ENCODE measurements at regions of chr3 and their contacts with region 1.

Region 1: GRCh38 chr3:17412950-17413530 is 329.4 kb downstream of the TBC1D5 start:
- DNase-seq: peak; percentile 7
- ATAC-seq: peak; percentile 61
- H3K4me3 Mint-ChIP-seq: no peak overlapping the region
- H3K27ac Mint-ChIP-seq: no peak overlapping the region
- H3K4me1 Mint-ChIP-seq: no peaks in the 10 kb centered on the region
- H3K27me3 Mint-ChIP-seq: no peaks in the 10 kb centered on the region

Region 2: DNA sequence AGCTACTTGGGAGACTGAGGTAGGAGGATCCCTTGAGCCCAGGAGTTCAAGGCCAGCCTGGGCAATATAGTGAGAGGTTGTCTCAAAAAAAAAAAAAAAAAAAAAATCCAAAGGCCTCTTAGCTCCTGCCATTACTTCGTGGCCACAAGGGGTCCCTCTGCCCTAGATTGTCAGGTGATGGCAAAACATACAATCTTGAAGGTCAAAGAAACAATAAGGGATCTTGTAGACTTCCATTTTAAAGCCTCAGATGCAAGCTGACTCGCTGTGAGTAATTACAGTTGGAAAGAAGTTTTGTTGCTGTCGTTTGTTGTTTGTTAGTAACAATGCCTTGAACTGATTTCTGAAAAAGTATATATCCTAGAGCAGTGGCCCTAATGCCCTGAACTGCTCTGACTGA is 584.2 kb before region 1 on chr3:
- CTCF ChIA-PET with region 1: no interaction called
- POLR2A ChIA-PET with region 1: no interaction called
- intact Hi-C with region 1: loop called in 1 of 2 experiments (anchors 1 kb)
- DNase-seq: peak; percentile 73
- ATAC-seq: peak; percentile 51
- H3K4me3 Mint-ChIP-seq: no peak overlapping the region
- H3K27ac Mint-ChIP-seq: no peak overlapping the region
- H3K4me1 Mint-ChIP-seq: peaks cover 16% of the 10 kb centered on the region
- H3K27me3 Mint-ChIP-seq: no peaks in the 10 kb centered on the region

Region 3: GRCh38 chr3:17233398-17233800 is 179.6 kb before region 1 on chr3:
- CTCF ChIA-PET with region 1: no interaction called
- POLR2A ChIA-PET with region 1: no interaction called
- intact Hi-C with region 1: loop called in 1 of 2 experiments (anchors 1 kb)
- DNase-seq: peak; percentile 47
- ATAC-seq: peak; percentile 91
- H3K4me3 Mint-ChIP-seq: no peak overlapping the region
- H3K27ac Mint-ChIP-seq: no peak overlapping the region
- H3K4me1 Mint-ChIP-seq: peaks cover 24% of the 10 kb centered on the region
- H3K27me3 Mint-ChIP-seq: no peaks in the 10 kb centered on the region

Region 4: DNA sequence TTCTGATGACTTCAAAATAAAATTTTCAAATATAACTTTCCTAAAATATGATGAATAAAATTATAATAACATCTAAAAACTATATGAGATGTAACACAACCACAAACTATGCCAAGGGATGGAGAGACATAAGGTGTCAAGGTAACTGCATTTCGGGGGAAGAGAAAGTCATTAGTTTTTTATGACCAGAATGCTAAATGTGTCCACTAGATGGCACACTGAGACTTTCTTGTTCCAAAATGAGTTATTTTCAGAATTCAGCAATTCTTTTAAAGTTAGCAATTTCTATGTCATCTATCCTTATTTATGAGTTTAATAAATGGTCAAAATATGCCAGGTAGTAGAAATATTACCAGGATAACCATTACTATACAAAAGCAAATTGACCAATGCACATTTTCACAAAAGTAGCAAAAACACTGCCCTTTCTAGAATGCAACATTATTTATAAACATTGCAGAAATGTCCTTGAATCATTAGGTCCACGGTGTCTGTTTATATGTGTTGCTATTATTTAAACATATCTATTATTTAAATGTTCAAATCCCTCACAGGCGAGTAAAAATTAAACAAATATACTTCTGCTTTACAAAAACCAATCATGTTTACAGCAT is 154.1 kb before region 1 on chr3:
- CTCF ChIA-PET with region 1: interaction called, 7 read pairs
- POLR2A ChIA-PET with region 1: no interaction called
- intact Hi-C with region 1: loop called (anchors 1 kb)
- DNase-seq: peak; percentile 8
- ATAC-seq: no peak
- H3K4me3 Mint-ChIP-seq: no peak overlapping the region
- H3K27ac Mint-ChIP-seq: no peak overlapping the region
- H3K4me1 Mint-ChIP-seq: no peaks in the 10 kb centered on the region
- H3K27me3 Mint-ChIP-seq: no peaks in the 10 kb centered on the region

Region 5: DNA sequence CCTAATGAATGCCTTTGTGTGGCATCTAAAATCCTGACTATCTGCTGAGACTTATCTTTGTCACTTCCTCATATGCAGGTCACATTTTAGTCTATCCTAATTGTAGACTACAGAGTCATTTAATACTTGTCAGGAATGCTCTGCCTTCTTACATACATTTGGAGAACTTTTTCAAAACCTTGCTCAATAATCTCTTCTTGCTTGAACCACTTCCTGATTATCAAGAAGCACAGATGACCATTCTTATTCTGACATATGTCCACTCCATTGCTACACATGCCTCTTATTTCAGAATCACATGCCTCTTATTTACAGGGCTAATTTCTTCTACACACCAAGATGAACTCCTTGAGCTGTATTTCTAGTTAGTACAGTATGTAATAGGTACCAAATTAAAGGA is 70.9 kb before region 1 on chr3:
- CTCF ChIA-PET with region 1: no interaction called
- POLR2A ChIA-PET with region 1: no interaction called
- intact Hi-C with region 1: no loop called
- DNase-seq: no peak
- ATAC-seq: no peak
- H3K4me3 Mint-ChIP-seq: no peak overlapping the region
- H3K27ac Mint-ChIP-seq: no peak overlapping the region
- H3K4me1 Mint-ChIP-seq: no peaks in the 10 kb centered on the region
- H3K27me3 Mint-ChIP-seq: no peaks in the 10 kb centered on the region

Region 6: DNA sequence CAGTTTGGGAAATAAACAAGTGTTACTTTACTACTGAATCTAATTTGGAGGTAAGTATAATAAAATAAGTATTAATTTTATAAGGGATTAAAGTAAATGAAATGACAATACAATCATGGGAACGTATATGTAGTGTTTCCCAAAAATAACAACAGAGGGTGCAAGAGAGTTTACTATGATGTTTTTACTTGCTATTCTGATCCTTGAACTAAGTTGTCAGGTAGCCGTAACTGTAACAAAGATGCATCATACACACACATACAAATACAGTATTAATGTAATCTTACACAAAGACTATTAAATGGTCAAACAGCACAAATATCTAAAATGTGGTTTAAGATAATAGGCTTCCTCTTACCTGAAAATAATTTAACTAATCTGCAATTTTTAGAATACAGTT is 18.0 kb after region 1 on chr3:
- CTCF ChIA-PET with region 1: interaction called, 10 read pairs
- POLR2A ChIA-PET with region 1: no interaction called
- intact Hi-C with region 1: no loop called
- DNase-seq: no peak
- ATAC-seq: peak; percentile 42
- H3K4me3 Mint-ChIP-seq: no peak overlapping the region
- H3K27ac Mint-ChIP-seq: no peak overlapping the region
- H3K4me1 Mint-ChIP-seq: no peaks in the 10 kb centered on the region
- H3K27me3 Mint-ChIP-seq: no peaks in the 10 kb centered on the region

Region 7: DNA sequence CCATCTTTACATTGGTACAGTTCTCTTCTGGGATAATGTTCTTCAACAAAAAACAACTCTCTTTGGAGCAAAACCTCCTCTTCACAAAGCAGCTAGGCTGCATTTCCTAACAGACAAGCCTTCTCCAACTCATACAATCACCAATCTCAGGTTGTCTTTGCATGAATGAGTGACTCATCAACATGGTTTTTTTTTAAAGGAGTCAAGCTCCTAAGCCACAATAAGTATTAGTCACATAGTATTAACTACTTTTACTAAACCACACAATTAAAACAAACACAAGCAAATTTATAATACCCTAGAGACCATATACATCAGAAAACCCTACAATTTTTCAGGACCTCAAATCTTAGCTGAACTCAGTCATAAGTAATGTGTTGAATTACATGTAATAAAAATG is 192.0 kb after region 1 on chr3:
- CTCF ChIA-PET with region 1: no interaction called
- POLR2A ChIA-PET with region 1: no interaction called
- intact Hi-C with region 1: no loop called
- DNase-seq: no peak
- ATAC-seq: peak; percentile 78
- H3K4me3 Mint-ChIP-seq: no peak overlapping the region
- H3K27ac Mint-ChIP-seq: no peak overlapping the region
- H3K4me1 Mint-ChIP-seq: peaks cover 6% of the 10 kb centered on the region
- H3K27me3 Mint-ChIP-seq: no peaks in the 10 kb centered on the region

Region 8: GRCh38 chr3:17717411-17717810 is 304.4 kb after region 1 on chr3:
- CTCF ChIA-PET with region 1: no interaction called
- POLR2A ChIA-PET with region 1: no interaction called
- intact Hi-C with region 1: no loop called
- DNase-seq: no peak
- ATAC-seq: no peak
- H3K4me3 Mint-ChIP-seq: no peak overlapping the region
- H3K27ac Mint-ChIP-seq: no peak overlapping the region
- H3K4me1 Mint-ChIP-seq: no peaks in the 10 kb centered on the region
- H3K27me3 Mint-ChIP-seq: no peaks in the 10 kb centered on the region

Region 9: GRCh38 chr3:17749281-17749680 is 336.2 kb after region 1 on chr3:
- CTCF ChIA-PET with region 1: no interaction called
- POLR2A ChIA-PET with region 1: no interaction called
- intact Hi-C with region 1: no loop called
- DNase-seq: peak; percentile 44
- ATAC-seq: peak; percentile 74
- H3K4me3 Mint-ChIP-seq: peak overlapping the region; percentile 24
- H3K27ac Mint-ChIP-seq: peak overlapping the region; percentile 14
- H3K4me1 Mint-ChIP-seq: peaks cover 21% of the 10 kb centered on the region
- H3K27me3 Mint-ChIP-seq: no peaks in the 10 kb centered on the region

Region 10: DNA sequence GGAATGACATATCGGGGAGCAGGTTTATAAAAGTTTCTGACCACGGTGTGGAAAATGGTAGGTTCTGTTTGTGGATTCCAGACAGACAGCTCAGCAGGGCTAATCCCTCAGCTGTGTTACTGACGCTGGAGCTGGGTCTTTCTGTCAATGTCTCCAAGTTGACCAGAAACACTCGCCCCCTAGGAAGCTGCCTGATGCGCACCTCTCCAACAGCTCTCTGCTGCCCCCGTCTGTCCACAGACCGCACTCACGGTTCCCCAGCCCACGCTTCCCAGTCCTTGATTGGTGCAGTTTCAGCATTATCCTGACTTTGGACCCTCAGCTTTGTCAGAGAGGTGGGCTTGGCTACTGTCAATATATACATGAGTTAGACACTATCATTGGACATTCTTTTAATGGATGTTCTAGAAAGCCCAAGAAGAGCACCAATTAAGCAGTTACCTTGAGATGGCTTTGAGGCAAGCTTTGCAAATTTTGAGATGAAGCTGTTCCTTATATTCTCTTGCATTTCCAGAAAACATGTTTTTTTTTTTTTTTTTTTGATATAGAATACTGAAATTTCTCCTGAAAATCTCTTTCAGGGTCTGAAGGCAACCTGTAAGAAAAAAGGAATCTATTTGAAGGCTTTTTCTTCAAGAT is 428.3 kb after region 1 on chr3:
- CTCF ChIA-PET with region 1: interaction called, 12 read pairs
- POLR2A ChIA-PET with region 1: no interaction called
- intact Hi-C with region 1: loop called in 1 of 2 experiments (anchors 5 kb)
- DNase-seq: peak; percentile 87
- ATAC-seq: peak; percentile 97
- H3K4me3 Mint-ChIP-seq: no peak overlapping the region
- H3K27ac Mint-ChIP-seq: no peak overlapping the region
- H3K4me1 Mint-ChIP-seq: no peaks in the 10 kb centered on the region
- H3K27me3 Mint-ChIP-seq: no peaks in the 10 kb centered on the region

Measured in activated CD4-positive, alpha-beta T cell treated with anti-CD3 and anti-CD28 coated beads for 36 hours (primary cell).